ENCODE measurements at regions of chr1 and their contacts with region 1.

Region 1: GRCh38 chr1:111222308-111223125 is 5.0 kb upstream of the CHI3L2 start:
- DNase-seq: peak; percentile 89
- H3K4me3 Mint-ChIP-seq: peak overlapping the region; percentile 61
- H3K27ac Mint-ChIP-seq: peak overlapping the region; percentile 95
- H3K4me1 Mint-ChIP-seq: peaks cover 91% of the 10 kb centered on the region
- H3K27me3 Mint-ChIP-seq: no peaks in the 10 kb centered on the region

Region 2: DNA sequence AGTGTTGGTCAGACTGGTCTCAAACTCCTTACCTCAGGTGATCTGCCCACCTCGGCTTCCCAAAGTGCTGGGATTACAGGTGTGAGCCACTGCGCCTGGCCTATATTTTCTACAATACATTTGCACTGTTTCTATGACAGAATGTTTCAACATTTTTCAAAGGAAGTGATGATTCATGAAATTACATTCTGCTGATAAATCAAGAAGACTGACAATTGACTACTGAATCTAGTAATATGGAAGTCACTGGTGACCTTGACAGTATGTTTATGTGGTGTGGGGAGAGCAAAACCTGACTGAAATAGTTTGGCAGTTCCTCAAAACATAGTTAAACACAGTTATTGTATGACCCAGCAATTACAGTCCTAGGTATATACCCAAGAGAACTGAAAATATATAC is 276.9 kb before region 1 on chr1:
- CTCF ChIA-PET with region 1: no interaction called
- POLR2A ChIA-PET with region 1: no interaction called
- intact Hi-C with region 1: no loop called
- DNase-seq: no peak
- H3K4me3 Mint-ChIP-seq: no peak overlapping the region
- H3K27ac Mint-ChIP-seq: no peak overlapping the region
- H3K4me1 Mint-ChIP-seq: peaks cover 2% of the 10 kb centered on the region
- H3K27me3 Mint-ChIP-seq: no peaks in the 10 kb centered on the region

Region 3: DNA sequence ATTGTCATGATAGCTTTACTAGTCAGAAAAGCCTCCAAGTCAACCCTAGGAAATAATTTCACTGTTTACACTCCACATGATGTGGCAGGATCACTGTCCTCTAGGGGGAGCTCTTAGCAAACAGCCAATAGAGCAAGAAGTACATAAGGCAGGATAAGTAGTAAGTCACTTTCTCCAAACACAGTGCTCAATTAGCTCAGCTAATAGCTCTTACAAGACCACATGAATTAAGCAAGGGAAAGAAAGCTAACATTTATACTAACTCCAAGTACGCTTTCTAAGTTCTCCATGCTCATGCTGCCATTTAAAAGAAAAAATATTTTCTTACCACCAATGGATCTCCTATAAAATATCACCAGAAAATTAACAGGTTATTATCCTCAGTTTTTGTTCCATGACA is 191.9 kb before region 1 on chr1:
- CTCF ChIA-PET with region 1: interaction called, 10 read pairs
- POLR2A ChIA-PET with region 1: no interaction called
- intact Hi-C with region 1: loop called (anchors 2 kb)
- DNase-seq: peak; percentile 53
- H3K4me3 Mint-ChIP-seq: no peak overlapping the region
- H3K27ac Mint-ChIP-seq: no peak overlapping the region
- H3K4me1 Mint-ChIP-seq: no peaks in the 10 kb centered on the region
- H3K27me3 Mint-ChIP-seq: peaks cover 10% of the 10 kb centered on the region

Region 4: DNA sequence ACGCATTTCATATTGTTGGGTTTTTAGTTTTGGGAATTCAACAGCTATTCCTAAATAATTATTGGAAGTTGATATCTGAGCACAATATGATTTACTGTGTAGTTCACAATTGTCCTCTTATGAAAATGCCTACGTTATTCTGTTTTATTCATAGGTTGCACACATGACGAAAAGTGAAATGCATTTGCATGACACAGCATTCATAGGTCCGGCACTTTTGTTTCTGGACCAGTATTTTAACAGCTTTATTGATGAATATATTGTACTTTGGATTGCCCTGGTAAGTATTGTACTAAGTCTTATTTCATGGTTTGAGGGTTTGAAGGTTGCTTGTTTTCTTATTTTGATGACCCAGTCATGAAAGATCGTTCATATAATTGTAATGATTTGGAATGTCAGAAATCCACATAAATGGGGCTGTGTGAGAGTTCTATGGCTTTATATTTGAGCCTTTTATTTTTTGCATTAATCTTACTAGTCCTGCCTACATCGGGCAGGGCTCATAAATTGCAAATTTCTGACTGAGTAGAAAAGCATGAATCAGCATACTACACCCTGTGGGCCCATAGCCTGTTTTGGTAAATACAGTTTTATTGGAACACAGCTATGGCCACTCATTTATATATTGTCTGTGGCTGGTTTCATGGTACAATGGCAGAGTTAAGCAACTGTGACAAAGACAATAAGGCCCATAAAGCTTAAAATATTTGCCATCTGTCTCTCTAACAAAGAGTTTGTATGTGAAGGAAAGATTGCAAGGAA is 39.0 kb before region 1 on chr1:
- CTCF ChIA-PET with region 1: interaction called, 8 read pairs
- POLR2A ChIA-PET with region 1: interaction called, 6 read pairs
- intact Hi-C with region 1: loop called (anchors 5 kb)
- DNase-seq: no peak
- H3K4me3 Mint-ChIP-seq: no peak overlapping the region
- H3K27ac Mint-ChIP-seq: peak overlapping the region; percentile 61
- H3K4me1 Mint-ChIP-seq: peaks cover 70% of the 10 kb centered on the region
- H3K27me3 Mint-ChIP-seq: no peaks in the 10 kb centered on the region

Region 5: GRCh38 chr1:111203681-111204200 is 18.8 kb before region 1 on chr1:
- CTCF ChIA-PET with region 1: interaction called, 143 read pairs
- POLR2A ChIA-PET with region 1: interaction called, 256 read pairs
- intact Hi-C with region 1: loop called (anchors 1 kb)
- DNase-seq: peak; percentile 93
- H3K4me3 Mint-ChIP-seq: peak overlapping the region; percentile 92
- H3K27ac Mint-ChIP-seq: peak overlapping the region; percentile 97
- H3K4me1 Mint-ChIP-seq: peaks cover 38% of the 10 kb centered on the region
- H3K27me3 Mint-ChIP-seq: no peaks in the 10 kb centered on the region

Region 6: GRCh38 chr1:111334169-111334568 is 111.7 kb after region 1 on chr1:
- CTCF ChIA-PET with region 1: interaction called, 63 read pairs
- POLR2A ChIA-PET with region 1: no interaction called
- intact Hi-C with region 1: loop called (anchors 1 kb)
- DNase-seq: peak; percentile 62
- H3K4me3 Mint-ChIP-seq: no peak overlapping the region
- H3K27ac Mint-ChIP-seq: peak overlapping the region; percentile 54
- H3K4me1 Mint-ChIP-seq: peaks cover 2% of the 10 kb centered on the region
- H3K27me3 Mint-ChIP-seq: no peaks in the 10 kb centered on the region

Measured in activated CD4-positive, alpha-beta memory T cell treated with anti-CD3 and anti-CD28 coated beads for 36 hours (primary cell).